Dendritic cell treated with granulocyte-macrophage colony-stimulating factor and Interleukin-4, amounts not matched to agents 40 ng/mL and 50 ng/mL, for 4 days (primary cell): ENCODE measurements at regions of chr11 and their contacts with region 1.

Region 1: DNA sequence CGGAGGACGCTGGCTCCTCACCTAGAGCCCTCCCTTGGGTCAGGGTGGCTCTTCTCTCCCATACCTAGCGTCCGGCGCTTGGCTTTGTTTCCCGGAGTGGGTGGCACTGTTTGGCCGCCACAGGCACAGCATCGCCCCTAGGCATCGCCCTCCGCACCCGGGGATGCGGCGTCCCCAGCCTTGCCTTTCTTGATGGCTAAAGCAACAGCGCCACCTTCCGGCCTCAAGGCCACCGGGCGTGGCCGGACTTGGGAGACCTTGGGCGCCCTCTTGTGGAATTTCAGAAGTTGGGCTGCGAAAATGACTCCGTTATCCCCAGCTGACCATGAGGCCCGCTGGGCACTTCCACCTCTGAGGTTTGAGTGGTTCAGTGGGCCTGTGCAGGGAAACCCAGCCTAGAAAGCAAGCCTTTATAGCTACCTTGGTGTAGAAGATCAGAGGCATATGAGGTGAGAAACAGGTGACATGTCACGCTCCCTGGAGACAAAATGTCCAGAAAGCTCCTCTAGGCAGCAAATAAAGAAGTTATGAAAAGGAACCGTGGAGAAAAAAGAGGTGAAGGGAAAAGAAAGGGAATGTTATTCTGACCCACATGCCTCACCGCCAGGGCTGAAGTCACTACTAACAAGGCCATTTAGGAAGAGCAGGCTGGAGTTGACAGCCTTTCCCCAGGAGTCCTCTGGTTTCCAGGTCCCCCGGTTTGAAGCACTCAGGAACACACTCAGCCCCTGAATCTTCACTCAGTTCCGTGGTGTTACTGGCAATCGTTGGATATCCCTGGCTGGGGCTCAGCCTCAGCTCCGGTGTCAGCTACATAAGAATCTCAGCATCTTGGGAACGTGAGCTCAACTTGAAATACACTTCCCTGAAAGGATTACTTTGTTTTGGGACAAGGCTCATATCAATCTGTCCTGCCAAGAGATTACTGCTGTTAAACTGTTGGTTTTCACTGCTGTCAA is 54.1 kb downstream of the SNX19 start:
- H3K4me3 Mint-ChIP-seq: no peak overlapping the region
- H3K27ac Mint-ChIP-seq: no peak overlapping the region
- H3K4me1 Mint-ChIP-seq: peaks cover 8% of the 10 kb centered on the region
- H3K27me3 Mint-ChIP-seq: no peaks in the 10 kb centered on the region

Region 2: GRCh38 chr11:130213143-130213978 is 648.8 kb before region 1 on chr11:
- intact Hi-C with region 1: loop called (anchors 5 kb)
- H3K4me3 Mint-ChIP-seq: no peak overlapping the region
- H3K27ac Mint-ChIP-seq: no peak overlapping the region
- H3K4me1 Mint-ChIP-seq: no peaks in the 10 kb centered on the region
- H3K27me3 Mint-ChIP-seq: peaks cover 10% of the 10 kb centered on the region

Region 3: DNA sequence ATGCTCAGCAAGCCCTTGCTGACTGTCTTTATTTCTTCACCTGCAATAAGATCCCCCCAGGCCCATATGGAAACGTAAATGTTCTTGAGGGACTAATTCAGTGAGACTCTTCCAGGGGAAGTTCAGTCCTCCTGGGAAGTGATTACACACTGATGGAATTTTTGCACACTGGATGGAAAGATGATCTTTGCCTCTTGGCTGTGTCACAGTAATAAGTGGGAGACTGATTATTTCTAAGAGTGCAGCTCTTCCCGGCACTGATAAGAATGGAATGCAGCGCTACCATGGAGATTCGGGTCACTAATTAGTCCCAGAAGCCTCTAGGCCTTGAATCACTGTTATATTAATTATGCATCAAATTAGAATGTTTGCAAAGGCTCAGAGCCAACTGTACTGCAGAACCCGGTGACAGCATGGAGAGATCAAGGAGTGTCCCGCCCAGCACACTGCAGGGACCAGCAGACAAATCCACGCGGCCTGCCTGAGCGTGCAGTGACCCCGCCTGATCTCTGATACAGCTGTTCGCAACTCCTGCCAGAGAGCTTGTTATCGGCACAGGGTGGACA is 124.2 kb before region 1 on chr11:
- intact Hi-C with region 1: no loop called
- H3K4me3 Mint-ChIP-seq: no peak overlapping the region
- H3K27ac Mint-ChIP-seq: no peak overlapping the region
- H3K4me1 Mint-ChIP-seq: no peaks in the 10 kb centered on the region
- H3K27me3 Mint-ChIP-seq: no peaks in the 10 kb centered on the region